Right ventricle myocardium inferior (tissue), 1 donor: ENCODE measurements at regions of chr2 and their contacts with region 1.

Region 1: DNA sequence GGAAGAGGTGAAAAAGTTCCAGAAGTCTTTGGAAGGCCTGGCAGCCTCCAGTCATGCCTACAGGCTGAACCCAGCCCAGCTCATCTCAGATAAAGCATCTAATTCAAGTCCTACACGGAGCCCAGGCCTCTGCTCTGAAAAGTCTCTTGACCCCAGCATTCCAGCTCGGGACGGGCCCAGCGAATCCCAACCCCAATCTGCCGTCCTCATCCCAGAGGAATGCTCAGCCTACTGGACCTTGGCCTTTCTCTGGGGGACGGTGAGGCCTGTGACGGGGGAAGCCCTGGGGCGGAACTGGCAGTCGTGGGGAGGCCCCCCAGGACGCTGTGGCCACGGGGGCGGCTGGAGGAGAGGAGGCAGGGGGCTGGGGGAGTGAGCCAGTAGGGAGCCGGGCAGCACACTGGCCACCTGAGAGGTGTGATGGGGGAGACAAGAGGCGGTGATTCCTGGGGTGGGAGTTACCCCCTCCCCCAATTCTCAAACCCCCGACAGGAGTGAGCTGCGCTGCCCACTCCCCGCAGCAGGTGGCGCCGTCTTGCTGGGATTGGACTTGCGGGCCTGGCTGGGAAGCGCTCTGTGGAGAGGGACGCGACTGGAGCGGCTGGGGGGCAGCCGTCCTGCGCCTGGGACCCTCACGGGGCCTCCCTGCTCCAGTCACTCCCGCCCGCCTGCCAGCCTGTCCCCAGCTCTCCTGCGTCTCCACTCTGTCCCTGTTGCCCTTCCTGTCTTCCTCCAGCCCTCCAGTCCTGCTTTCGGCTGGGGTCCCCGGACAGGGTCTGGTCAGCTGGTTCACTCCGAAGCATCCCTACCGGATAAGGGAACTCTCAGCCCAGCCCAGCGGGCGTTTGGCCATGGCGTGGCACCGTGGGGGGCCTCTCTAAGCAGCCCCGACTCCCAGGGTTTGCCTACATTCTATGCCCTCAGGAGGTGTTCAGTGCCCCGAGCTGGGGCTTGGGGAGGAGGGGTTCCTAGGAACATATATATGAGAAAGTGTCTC is 182.6 kb upstream of the HAAO start:
- DNase-seq: peak; percentile 87
- ATAC-seq: peak; percentile 88

Region 2: GRCh38 chr2:43086451-43087221 is 111.6 kb after region 1 on chr2:
- intact Hi-C with region 1: loop called (anchors 5 kb)
- DNase-seq: no peak
- ATAC-seq: peak; percentile 77

Region 3: GRCh38 chr2:43131024-43131889 is 156.2 kb after region 1 on chr2:
- intact Hi-C with region 1: loop called (anchors 5 kb)
- DNase-seq: peak; percentile 90
- ATAC-seq: peak; percentile 58

Region 4: DNA sequence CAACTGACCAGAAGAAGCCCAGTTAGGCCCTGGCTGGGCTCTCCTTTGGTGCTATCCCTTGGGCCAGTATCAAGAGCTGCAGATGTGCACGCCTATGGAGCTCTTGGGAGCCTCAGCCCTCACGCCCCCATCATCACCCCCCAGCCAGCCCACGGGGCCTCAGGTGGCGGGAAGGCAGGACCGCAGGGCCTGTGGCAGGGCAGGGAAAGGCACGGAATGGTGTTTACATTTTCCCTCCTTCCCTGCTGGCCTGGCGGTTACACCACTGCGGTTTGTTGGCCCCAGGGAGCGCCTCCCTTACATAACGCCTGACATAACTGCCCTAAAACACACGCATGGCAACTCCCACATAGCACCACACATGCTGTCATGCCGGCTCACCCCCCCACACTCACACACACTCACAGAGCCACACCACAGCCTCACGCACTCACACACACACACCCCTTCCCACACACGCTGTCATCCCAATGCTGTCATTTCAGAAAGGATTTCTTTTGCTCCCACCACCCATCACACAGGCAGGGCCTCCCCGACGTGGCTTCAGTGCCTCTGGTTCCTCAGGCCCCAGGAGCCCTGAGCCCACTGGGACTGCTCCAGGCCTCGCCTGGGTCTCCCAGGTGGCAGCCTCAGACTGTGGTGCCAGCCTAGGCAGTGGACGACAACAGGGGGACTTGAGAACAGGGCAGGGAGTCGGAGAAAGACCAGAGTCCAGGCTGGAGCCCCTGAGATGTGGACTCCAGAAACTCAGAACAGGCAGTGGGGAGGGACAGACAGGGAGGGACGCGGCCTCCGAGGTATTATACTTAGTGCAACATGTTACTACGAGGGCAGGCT is 235.7 kb after region 1 on chr2:
- intact Hi-C with region 1: no loop called
- DNase-seq: peak; percentile 81
- ATAC-seq: peak; percentile 82